Activated CD4-positive, alpha-beta T cell treated with anti-CD3 and anti-CD28 coated beads for 36 hours (primary cell): ENCODE measurements at regions of chr6 and their contacts with region 1.

Region 1: DNA sequence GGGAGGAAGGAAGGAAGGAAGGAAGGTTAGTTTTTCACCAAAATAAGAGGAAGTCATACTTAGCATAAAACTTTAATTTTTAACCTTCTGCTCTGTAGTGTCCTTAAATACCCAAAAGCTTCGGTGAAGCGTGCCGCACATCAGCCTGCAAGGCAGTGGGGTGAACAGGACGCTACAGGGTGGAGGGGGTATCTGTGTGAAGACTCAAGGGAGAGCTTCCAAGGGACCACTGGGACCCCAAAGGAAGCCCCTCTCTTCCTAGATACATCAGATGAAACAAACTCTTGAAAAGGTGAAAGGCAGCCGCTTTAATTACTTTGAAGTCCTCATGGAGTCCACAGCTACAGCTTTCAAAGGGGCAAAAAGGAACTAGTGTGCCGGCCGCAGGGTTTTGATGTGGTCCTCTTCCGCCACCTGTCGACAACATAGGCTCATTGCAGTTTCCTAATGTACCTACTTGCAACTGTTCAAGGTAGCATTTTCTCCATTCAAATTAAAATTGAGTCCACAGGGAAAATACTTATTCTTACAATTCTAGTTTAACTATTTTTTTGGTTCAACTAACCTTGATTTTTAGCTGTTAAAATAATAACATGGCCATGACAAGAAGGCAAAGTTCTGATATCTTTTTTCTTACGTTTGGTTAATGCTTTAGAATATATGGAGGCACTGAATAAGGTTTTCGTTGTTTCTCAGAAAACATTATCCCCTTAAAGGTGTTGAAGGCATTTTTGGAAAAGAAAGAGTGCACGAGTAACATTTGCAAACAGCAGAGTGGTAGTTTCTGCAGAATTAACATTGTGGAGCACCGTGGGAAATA is 135.0 kb upstream of the RIPOR2 start:
- DNase-seq: peak; percentile 88
- ATAC-seq: peak; percentile 94
- H3K4me3 Mint-ChIP-seq: no peak overlapping the region
- H3K27ac Mint-ChIP-seq: peak overlapping the region; percentile 47
- H3K4me1 Mint-ChIP-seq: peaks cover 4% of the 10 kb centered on the region
- H3K27me3 Mint-ChIP-seq: no peaks in the 10 kb centered on the region

Region 2: DNA sequence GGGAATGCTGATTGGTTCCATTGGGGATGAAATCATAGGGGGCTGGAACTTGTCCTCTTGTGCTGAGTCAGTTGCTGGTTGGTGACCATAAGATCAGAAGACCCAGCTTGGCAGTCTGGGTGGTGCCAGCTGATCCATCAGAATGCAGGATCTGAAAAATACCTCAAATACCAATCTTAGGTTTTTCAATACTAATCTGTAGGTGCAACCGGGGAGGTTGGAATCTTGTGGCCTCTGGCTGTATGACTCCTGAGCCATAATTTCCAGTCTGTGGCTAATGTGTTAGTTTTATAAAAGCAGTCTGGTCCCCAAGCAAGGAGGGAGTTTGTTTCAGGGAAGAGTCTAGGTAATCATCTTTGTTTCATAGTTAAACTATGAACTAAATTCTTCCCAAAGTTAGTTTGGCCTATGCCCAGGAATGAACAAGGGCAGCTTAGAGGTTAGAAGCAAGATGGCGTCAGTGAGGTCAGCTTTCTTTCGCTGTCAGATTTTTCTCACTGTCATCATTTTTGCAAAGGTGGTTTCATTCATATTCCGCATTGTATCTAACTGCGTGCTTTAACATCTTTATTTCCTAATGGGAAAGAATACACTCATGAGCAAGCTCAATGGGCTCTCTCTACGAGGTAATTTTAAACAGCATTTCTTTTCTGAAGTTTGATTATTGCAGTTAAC is 274.0 kb before region 1 on chr6:
- CTCF ChIA-PET with region 1: interaction called, 3 read pairs
- POLR2A ChIA-PET with region 1: no interaction called
- intact Hi-C with region 1: loop called in 1 of 2 experiments (anchors 5 kb)
- DNase-seq: peak; percentile 25
- ATAC-seq: peak; percentile 46
- H3K4me3 Mint-ChIP-seq: no peak overlapping the region
- H3K27ac Mint-ChIP-seq: peak overlapping the region; percentile 13
- H3K4me1 Mint-ChIP-seq: peaks cover 33% of the 10 kb centered on the region
- H3K27me3 Mint-ChIP-seq: no peaks in the 10 kb centered on the region

Region 3: DNA sequence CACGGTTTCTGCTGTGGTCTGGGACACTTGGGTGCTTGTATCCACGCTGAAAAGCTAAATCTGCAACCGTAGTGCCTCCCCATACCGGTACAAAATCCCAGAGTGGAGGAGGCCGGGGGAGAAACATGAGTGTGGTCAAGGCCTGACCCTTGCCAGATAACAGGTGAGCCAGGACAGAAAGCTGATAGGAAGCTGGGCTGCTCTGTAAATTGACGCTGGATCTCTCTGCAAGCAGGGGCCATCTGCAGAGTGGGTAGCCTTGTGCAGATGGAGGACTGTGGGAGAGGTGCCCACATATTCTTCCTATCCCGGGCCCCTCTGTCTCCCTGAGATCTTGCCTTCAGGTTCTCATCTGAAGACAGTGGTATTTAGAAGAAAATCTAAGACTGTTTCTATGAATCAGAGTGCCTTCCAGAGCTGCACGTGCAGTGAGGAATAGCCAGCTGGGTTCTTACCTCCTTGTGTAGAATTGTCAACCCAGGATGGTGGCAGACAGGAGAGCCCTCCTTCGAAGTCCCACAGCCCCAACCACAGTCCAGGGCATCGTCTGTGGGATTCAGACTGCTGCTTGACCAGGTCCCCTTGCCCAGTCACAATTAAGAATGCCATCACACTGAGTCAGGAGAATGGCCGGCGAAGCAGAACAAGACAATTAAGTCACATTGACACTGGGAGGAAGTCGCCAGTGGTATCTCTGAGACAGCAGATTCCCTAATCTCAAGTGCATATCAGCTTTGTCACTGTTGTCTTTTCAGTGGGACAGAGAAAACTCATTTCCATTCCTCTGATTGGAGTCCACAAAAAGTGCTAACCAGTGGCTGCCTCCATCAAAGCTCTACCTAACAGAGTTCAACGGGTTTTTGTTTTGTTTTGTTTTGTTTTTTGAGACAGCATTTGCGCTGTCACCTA is 35.0 kb before region 1 on chr6:
- CTCF ChIA-PET with region 1: interaction called, 10 read pairs
- POLR2A ChIA-PET with region 1: no interaction called
- intact Hi-C with region 1: no loop called
- DNase-seq: peak; percentile 31
- ATAC-seq: peak; percentile 45
- H3K4me3 Mint-ChIP-seq: peak overlapping the region; percentile 81
- H3K27ac Mint-ChIP-seq: peak overlapping the region; percentile 93
- H3K4me1 Mint-ChIP-seq: peaks cover 68% of the 10 kb centered on the region
- H3K27me3 Mint-ChIP-seq: no peaks in the 10 kb centered on the region

Region 4: DNA sequence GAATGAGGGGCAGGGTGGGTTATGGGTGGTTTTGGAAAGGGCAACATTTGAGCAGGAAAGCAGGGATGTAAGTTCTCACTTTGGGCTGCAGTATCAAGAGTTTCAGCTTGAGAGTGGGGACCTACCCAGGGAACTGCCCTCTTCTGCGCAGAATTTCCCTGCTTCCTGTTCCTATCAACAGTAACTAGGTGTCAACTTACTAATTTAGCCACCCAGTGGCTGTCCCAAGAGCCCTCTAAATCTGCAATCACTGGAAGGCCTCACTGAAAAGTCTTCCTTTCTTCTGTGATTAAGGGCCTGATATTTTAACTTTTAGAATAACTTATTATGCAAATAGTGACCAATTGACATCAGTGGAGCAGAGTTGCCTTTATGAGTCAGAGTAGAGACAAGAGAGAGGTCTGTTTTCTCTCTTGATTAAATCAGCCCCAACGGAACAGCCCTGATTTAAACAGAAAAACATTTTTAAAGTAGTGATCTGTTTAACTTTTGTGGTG is 16.8 kb before region 1 on chr6:
- CTCF ChIA-PET with region 1: interaction called, 14 read pairs
- POLR2A ChIA-PET with region 1: no interaction called
- intact Hi-C with region 1: no loop called
- DNase-seq: peak; percentile 32
- ATAC-seq: peak; percentile 33
- H3K4me3 Mint-ChIP-seq: no peak overlapping the region
- H3K27ac Mint-ChIP-seq: peak overlapping the region; percentile 59
- H3K4me1 Mint-ChIP-seq: peaks cover 73% of the 10 kb centered on the region
- H3K27me3 Mint-ChIP-seq: no peaks in the 10 kb centered on the region

Region 5: GRCh38 chr6:25107218-25107617 is 36.5 kb after region 1 on chr6:
- CTCF ChIA-PET with region 1: no interaction called
- POLR2A ChIA-PET with region 1: no interaction called
- intact Hi-C with region 1: no loop called
- DNase-seq: no peak
- ATAC-seq: no peak
- H3K4me3 Mint-ChIP-seq: no peak overlapping the region
- H3K27ac Mint-ChIP-seq: no peak overlapping the region
- H3K4me1 Mint-ChIP-seq: no peaks in the 10 kb centered on the region
- H3K27me3 Mint-ChIP-seq: no peaks in the 10 kb centered on the region